Calu3 (cell line): ENCODE measurements at regions of chr3 and their contacts with region 1.

Region 1: DNA sequence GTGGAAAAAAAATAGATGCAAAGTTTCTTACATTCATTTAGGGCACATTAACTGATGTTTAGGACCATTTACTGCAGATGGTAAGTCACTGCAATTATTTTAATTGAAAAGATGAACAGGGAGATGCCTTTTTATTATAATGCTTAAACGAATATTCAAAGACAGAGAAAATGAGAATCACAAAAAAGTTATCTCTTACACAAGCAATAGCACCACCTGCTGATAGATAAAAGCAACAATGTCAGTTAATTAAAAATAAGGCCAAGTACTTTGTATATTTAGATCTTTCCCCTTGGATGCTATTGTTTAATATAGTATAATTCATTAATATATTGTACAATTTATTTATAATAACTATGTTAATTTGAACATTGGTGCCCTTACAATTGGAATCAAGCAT is 55.9 kb downstream of the IFT80 start:
- DNase-seq: no peak
- H3K4me3 Mint-ChIP-seq: no peak overlapping the region
- H3K27ac Mint-ChIP-seq: no peak overlapping the region
- H3K4me1 Mint-ChIP-seq: no peaks in the 10 kb centered on the region
- H3K27me3 Mint-ChIP-seq: no peaks in the 10 kb centered on the region
- CTCF ChIP-seq: peak; percentile 46

Region 2: DNA sequence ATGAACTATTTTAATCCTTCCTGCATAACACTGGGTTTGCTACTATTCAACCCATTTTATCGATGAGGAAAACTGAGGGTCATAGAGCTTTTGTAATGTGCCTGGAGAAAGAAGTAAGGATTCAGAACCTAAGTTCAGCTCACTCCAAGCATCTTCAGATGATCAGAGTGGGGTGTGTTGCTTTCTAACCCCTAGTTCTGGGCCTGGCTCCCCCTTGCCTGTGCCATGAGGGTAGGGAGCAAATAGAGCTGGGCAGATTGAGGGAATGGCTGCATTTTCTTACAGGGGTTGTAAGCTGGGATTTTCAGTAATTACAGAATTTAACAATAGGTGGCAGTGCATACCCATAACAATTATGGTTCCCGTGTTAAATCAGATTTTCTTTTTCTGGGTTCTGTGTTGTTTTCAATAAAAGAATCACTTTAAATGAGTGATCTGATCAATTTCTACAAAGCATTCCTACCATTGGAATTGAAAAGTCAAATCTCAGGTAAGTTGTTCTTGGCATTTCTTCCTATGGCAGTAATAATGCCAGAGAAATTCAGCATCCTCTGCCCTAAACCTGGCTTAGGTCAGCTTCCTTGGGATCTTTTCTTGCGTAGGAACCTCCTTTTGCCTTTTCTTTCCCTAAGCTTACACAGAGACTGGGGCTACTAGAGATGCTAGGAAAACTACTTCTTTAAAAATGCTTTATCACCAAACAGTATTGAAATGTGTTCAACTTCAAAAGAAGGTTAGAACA is 458.3 kb before region 1 on chr3:
- CTCF ChIA-PET with region 1: interaction called, 3 read pairs
- intact Hi-C with region 1: loop called (anchors 10 kb)
- DNase-seq: peak; percentile 17
- H3K4me3 Mint-ChIP-seq: no peak overlapping the region
- H3K27ac Mint-ChIP-seq: no peak overlapping the region
- H3K4me1 Mint-ChIP-seq: no peaks in the 10 kb centered on the region
- H3K27me3 Mint-ChIP-seq: no peaks in the 10 kb centered on the region
- CTCF ChIP-seq: peak; percentile 75

Region 3: GRCh38 chr3:160225176-160226025 is 117.7 kb before region 1 on chr3 and contains the start of gene C3orf80:
- CTCF ChIA-PET with region 1: no interaction called
- intact Hi-C with region 1: loop called (anchors 5 kb)
- DNase-seq: peak; percentile 81
- H3K4me3 Mint-ChIP-seq: peak within 1 kb of the TSS; percentile 85
- H3K27ac Mint-ChIP-seq: peak within 1 kb of the TSS; percentile 59
- H3K4me1 Mint-ChIP-seq: peaks cover 9% of the 10 kb centered on the region
- H3K27me3 Mint-ChIP-seq: peaks cover 13% of the 10 kb centered on the region
- CTCF ChIP-seq: no peak
- total RNA-seq, gene C3orf80: 2.5 and 3.0 TPM in 2 replicates